A549 (cell line): ENCODE measurements at regions of chr20 and their contacts with region 1.

Region 1: DNA sequence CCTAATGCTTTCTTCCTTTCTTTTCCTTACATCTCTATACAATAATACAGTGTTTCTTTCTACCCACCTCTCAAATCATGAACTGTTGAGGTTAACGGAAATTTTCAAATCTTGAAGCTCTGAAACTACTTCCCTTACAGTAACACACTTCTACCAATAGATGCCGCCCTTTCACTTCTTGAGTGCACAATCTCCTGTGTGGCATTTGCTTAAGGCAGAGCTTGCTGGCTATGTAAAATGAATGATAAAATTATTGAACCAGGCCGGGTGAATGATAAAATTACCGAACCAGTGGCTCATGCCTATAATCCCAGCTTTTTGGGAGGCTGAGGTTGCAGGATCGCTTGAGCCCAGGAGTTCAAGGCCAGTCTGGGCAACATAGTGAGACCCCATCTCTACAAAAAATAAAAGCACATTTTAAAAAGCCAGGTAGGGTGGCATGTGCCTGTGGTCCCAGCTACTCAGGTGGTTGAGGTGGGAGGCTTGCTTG is 56.8 kb downstream of the KCNS1 start:
- DNase-seq: peak; percentile 39 to 75
- ATAC-seq: peak; percentile 82 to 87
- H3K4me3 ChIP-seq: no peak overlapping the region
- H3K27ac ChIP-seq: no peak overlapping the region
- H3K4me1 ChIP-seq: peaks cover 24% of the 10 kb centered on the region
- CTCF ChIP-seq: peak; percentile 87
- EP300 ChIP-seq: no peak
- POLR2A ChIP-seq: no peak
- RAD21 ChIP-seq: peak; percentile 82 to 86

Region 2: GRCh38 chr20:44997171-44998067 is 46.7 kb before region 1 on chr20:
- CTCF ChIA-PET with region 1: interaction called, 13 read pairs
- POLR2A ChIA-PET with region 1: no interaction called
- DNase-seq: no peak
- ATAC-seq: no peak
- H3K4me3 ChIP-seq: no peak overlapping the region
- H3K27ac ChIP-seq: no peak overlapping the region
- H3K4me1 ChIP-seq: peaks cover 6% of the 10 kb centered on the region; the same call in 2 of the 3 replicates
- CTCF ChIP-seq: no peak
- EP300 ChIP-seq: no peak
- POLR2A ChIP-seq: no peak
- RAD21 ChIP-seq: no peak

Region 3: DNA sequence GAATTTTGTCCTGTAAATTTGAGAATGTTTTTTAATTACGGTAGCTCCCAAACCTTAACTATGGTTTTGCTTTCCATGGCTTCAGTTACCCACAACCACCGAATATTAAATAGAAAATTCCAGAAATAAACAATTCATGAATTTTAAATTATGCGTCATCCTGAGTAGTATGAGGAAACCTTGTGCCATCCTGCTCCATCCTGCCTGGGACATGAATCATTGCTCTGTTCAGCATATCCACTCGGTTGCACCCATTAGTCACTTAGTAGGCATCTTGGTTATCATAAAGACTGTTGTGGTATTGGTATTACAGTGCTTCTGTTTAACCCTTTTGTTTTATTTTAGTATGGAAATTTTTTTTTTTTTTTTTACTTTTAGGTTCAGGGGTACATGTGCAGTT is 17.1 kb after region 1 on chr20:
- CTCF ChIA-PET with region 1: interaction called, 59 read pairs
- POLR2A ChIA-PET with region 1: no interaction called
- DNase-seq: peak; percentile 71 to 73
- ATAC-seq: peak; percentile 98 to 100
- H3K4me3 ChIP-seq: no peak overlapping the region
- H3K27ac ChIP-seq: peak overlapping the region; percentile 61 to 76; a peak in 5 of 6 replicates
- H3K4me1 ChIP-seq: peaks cover 41% of the 10 kb centered on the region
- CTCF ChIP-seq: no peak
- EP300 ChIP-seq: no peak
- POLR2A ChIP-seq: no peak
- RAD21 ChIP-seq: no peak

Region 4: DNA sequence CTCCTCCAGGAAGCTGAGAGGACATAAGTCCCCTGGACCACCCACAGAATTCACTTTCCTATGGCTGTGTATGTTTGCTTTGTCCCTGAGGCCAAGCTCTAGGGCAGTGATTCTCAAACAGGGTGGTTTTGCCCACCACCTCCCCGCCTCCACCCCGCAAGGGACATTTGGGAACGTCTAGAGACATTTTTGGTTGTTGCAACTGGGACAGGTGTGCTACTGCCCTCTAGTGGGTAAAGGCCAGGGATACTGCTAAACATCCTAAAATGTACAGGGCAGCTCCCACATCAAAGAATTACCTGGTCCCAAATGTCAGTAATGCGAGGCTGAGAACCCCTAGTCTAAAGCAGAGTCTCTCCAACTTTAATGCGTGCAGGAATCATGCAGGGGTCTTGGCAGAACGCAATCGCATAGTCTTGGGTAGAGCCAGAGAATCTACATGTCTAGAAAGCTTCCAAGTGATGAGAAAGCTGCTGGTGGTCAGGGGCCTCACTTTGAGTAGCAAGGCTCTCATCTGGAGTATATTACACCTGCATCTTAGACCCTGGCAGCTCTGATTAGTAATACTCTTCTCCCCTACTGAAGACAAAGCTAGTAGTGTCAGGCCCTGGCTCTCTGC is 51.7 kb after region 1 on chr20:
- CTCF ChIA-PET with region 1: interaction called, 197 read pairs
- POLR2A ChIA-PET with region 1: interaction called, 5 read pairs
- DNase-seq: peak; percentile 55 to 61
- ATAC-seq: peak; percentile 58 to 81; a peak in 5 of 6 replicates
- H3K4me3 ChIP-seq: no peak overlapping the region
- H3K27ac ChIP-seq: no peak overlapping the region
- H3K4me1 ChIP-seq: no peaks in the 10 kb centered on the region
- CTCF ChIP-seq: peak; percentile 90
- EP300 ChIP-seq: no peak
- POLR2A ChIP-seq: no peak
- RAD21 ChIP-seq: peak; percentile 74 to 83

Region 5: DNA sequence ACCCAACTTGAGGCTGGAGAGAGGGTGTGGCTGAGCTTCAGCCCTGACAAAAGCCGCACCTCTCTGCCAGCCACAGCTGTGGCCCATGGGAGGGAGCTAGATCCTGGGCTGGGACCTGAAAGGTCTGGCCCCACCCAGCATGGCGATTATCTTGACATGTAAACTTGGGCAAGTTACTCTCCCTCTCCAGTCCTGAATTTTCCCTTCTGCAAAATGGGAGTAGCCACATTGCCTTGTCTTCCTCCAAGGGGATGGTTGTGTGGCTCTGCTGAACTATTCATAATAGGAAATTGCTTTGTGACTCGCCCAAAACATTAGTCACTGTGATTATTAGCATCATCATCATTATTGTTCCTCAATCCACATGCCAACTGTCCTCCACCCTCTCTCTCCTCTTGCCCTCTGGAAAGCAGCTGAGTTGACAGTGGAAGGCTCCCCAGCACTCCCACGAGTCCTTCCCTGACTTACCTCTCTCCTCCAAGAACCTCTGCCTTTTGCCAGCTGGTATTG is 239.5 kb after region 1 on chr20:
- CTCF ChIA-PET with region 1: interaction called, 18 read pairs
- POLR2A ChIA-PET with region 1: no interaction called
- DNase-seq: no peak
- ATAC-seq: 0 out of 6 replicates have a peak, but pooled peaks of 1 of the 2 experiments have one; percentile 22
- H3K4me3 ChIP-seq: no peak overlapping the region
- H3K27ac ChIP-seq: no peak overlapping the region
- H3K4me1 ChIP-seq: no peaks in the 10 kb centered on the region
- CTCF ChIP-seq: no peak
- EP300 ChIP-seq: no peak
- POLR2A ChIP-seq: no peak
- RAD21 ChIP-seq: no peak

Region 6: DNA sequence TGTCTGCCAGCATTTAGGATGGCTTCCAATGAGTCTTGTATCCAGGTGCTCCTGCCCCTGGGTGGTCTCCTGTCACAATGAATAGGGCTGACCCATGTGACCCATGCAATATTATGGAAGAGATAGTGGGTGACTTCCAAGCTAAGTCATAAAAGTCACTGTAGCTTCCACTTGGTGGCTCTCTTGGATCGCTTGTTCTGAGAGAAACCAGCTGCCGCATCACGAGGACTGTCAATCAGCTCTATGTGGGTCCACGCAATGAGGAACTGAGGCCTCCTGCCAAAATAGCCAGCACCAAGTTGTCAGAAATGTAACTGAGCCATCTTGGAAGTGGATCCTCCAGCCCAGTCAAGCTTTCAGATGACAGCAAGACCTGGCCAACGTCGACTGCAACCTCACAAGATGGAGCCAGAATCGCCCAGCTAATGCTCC is 278.8 kb after region 1 on chr20:
- CTCF ChIA-PET with region 1: interaction called, 20 read pairs
- POLR2A ChIA-PET with region 1: no interaction called
- DNase-seq: peak in 1 of 2 experiments; percentile 63
- ATAC-seq: peak; percentile 61 to 71
- H3K4me3 ChIP-seq: no peak overlapping the region
- H3K27ac ChIP-seq: no peak overlapping the region
- H3K4me1 ChIP-seq: no peaks in the 10 kb centered on the region; the same call in 2 of the 3 replicates
- CTCF ChIP-seq: peak; percentile 59
- EP300 ChIP-seq: no peak
- POLR2A ChIP-seq: no peak
- RAD21 ChIP-seq: peak; percentile 81 to 82